Adrenal gland (tissue), 19 donors: ENCODE measurements at regions of chrX and their contacts with region 1.

Region 1: GRCh38 chrX:12021698-12022097 is 116.6 kb upstream of the FRMPD4 start:
- DNase-seq: no peak
- H3K4me3 ChIP-seq: no peak overlapping the region
- H3K27ac ChIP-seq: no peak overlapping the region
- H3K4me1 ChIP-seq: no peaks in the 10 kb centered on the region
- H3K27me3 ChIP-seq: peaks cover 5% of the 10 kb centered on the region
- CTCF ChIP-seq: no peak
- POLR2A ChIP-seq: no peak

Region 2: GRCh38 chrX:11813341-11813740 is 208.4 kb before region 1 on chrX:
- intact Hi-C with region 1: no loop called
- DNase-seq: no peak
- H3K4me3 ChIP-seq: no peak overlapping the region
- H3K27ac ChIP-seq: no peak overlapping the region
- H3K4me1 ChIP-seq: no peaks in the 10 kb centered on the region
- H3K27me3 ChIP-seq: peaks cover 3% of the 10 kb centered on the region
- CTCF ChIP-seq: no peak
- POLR2A ChIP-seq: no peak

Region 3: DNA sequence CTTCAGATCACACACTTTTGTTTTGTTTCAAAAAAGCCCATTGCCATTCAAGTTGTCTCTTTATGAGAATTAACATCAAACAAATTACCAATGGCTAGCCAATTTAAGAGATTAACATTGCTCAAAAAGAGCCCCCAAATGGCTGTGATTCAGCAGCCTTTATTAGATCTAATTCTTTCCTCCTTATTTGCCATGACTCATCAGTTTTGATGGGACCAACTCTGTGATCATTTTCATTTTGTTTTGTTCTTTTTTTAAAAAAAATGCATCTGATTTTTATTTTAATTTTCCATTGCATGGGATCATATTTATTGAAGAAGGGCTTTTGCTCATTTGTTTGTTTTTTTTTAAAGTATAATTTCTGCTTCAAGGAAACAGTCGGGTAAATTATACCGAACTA is 45.0 kb before region 1 on chrX:
- intact Hi-C with region 1: no loop called
- DNase-seq: no peak
- H3K4me3 ChIP-seq: no peak overlapping the region
- H3K27ac ChIP-seq: no peak overlapping the region
- H3K4me1 ChIP-seq: no peaks in the 10 kb centered on the region
- H3K27me3 ChIP-seq: peaks cover 2% of the 10 kb centered on the region
- CTCF ChIP-seq: no peak
- POLR2A ChIP-seq: no peak

Region 4: DNA sequence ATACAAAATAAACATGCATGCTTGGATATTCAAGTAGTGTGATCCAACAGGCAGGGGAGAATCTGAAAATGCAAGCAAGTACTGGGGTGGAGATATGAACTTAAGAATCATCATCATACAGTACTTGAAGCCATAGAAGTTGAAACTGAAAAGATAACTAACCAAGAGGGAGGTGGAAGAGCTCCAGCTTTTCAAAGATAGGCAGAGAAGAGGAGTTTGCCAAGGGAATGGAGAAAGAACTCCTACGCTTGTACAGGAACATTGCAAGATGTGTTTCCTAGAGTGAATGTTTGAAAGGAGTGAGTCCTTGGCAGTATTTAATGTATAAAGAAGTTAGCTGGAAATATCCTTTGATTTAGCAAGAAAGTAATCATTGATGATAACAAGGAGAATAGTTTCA is 10.4 kb after region 1 on chrX:
- intact Hi-C with region 1: loop called in 1 of 2 experiments (anchors 2 kb)
- DNase-seq: no peak
- H3K4me3 ChIP-seq: no peak overlapping the region
- H3K27ac ChIP-seq: no peak overlapping the region
- H3K4me1 ChIP-seq: no peaks in the 10 kb centered on the region
- H3K27me3 ChIP-seq: no peaks in the 10 kb centered on the region
- CTCF ChIP-seq: no peak
- POLR2A ChIP-seq: no peak

Region 5: DNA sequence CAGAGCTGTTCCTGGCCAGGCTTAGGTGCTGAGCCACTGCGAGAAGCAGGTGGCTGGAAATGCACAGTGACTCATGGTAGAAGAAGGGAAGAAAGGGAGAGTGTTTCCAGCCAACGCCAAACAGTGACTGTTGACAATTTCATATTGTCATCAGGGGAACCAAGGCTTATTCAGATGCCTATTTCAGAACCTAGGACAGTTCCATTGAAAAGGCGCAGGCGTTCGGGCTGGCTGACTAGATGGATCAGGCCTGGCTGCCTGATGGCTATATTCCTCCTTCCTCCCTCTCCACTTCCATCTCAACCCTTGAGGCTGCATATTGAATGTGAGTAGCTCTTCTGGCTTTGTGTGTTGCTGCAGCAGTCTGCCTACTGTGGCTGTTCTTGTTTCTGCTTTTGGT is 43.6 kb after region 1 on chrX:
- intact Hi-C with region 1: no loop called
- DNase-seq: no peak
- H3K4me3 ChIP-seq: no peak overlapping the region
- H3K27ac ChIP-seq: no peak overlapping the region
- H3K4me1 ChIP-seq: no peaks in the 10 kb centered on the region
- H3K27me3 ChIP-seq: no peaks in the 10 kb centered on the region
- CTCF ChIP-seq: no peak
- POLR2A ChIP-seq: no peak